Common myeloid progenitor, CD34-positive (primary cell): ENCODE measurements at regions of chr2 and their contacts with region 1.

Region 1: DNA sequence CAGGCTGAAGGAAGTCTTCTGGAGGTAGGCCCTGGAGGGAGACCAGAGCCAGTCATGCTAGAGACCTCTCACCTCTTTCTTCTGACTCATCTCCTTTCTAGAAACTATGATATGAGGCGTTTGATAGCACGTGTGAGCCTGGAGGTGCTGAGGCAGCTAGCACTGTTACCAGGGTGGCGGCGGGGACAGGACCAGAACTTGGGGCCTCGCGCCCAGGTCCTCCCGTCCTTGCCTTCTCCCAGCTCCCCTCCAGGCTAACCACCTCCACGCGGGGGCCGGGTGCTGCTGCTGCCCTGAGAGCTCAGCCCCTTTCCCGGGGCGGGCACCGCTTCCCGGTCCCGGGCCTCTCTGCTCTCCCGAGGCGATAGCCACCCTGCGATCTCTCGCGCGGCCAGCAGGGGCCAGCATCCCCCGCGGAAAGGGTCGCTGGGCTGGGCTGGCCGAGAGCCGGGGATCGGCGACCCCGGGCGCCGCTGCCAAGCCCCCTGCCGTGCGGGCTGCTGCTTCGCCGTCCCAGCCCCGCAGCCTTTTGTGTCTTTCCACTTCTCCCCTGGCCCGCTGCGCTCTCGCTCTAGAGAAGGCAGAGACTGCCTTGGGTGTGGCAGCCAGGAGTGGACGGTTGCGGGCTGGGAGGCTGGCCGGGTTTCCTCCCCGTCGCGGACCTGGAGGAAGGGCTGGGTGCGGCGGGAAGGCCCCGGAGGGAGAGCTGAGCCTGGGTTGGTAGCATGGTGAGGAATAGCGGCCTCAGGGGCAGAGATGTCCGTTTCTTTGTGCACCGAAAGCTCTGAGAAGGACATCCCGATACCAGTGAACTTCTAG is 49.1 kb downstream of the TMEM17 start:
- DNase-seq: peak; percentile 50 to 75 (median 72)
- H3K4me3 ChIP-seq: peak overlapping the region; percentile 32 to 88 (median 81)
- H3K27ac ChIP-seq: no peak overlapping the region
- H3K4me1 ChIP-seq: peaks cover 0 to 11% (median 8%) of the 10 kb centered on the region in 4 experiments
- H3K27me3 ChIP-seq: no peaks in the 10 kb centered on the region

Region 2: GRCh38 chr2:62443886-62444285 is 13.0 kb before region 1 on chr2:
- CTCF ChIA-PET with region 1: interaction called, 13 read pairs
- POLR2A ChIA-PET with region 1: interaction called, 3 read pairs
- DNase-seq: no peak
- H3K4me3 ChIP-seq: no peak overlapping the region
- H3K27ac ChIP-seq: no peak overlapping the region
- H3K4me1 ChIP-seq: no peaks in the 10 kb centered on the region
- H3K27me3 ChIP-seq: no peaks in the 10 kb centered on the region

Region 3: GRCh38 chr2:62475172-62476011 is 18.5 kb after region 1 on chr2:
- CTCF ChIA-PET with region 1: interaction called, 30 read pairs
- POLR2A ChIA-PET with region 1: no interaction called
- DNase-seq: peak; percentile 40 to 76 (median 67)
- H3K4me3 ChIP-seq: peak overlapping the region in 4 of 7 experiments; percentile 25 to 52 (median 46)
- H3K27ac ChIP-seq: peak overlapping the region; percentile 33 to 69
- H3K4me1 ChIP-seq: peaks cover 14 to 67% (median 50%) of the 10 kb centered on the region in 4 experiments
- H3K27me3 ChIP-seq: no peaks in the 10 kb centered on the region

Region 4: DNA sequence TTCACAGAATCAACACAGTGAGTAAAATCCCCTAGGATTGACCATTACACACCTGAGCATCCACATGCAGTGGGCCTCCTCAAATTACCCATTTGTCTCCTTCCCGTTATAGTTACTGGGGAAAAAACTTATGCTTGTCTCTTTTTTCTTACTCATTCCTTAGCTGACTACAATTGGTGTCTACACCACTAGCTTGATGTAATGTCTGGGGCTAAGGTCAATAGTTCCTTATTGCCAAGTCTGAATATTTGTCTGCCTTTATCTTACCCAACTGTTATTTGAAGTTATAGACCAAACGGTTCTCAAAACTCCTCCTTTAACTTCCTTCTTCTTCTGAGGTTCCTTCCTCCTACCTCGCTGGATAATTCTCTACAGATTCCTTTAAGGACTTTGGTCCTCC is 90.9 kb after region 1 on chr2:
- CTCF ChIA-PET with region 1: no interaction called
- POLR2A ChIA-PET with region 1: no interaction called
- DNase-seq: no peak
- H3K4me3 ChIP-seq: no peak overlapping the region
- H3K27ac ChIP-seq: no peak overlapping the region
- H3K4me1 ChIP-seq: no peaks in the 10 kb centered on the region
- H3K27me3 ChIP-seq: no peaks in the 10 kb centered on the region

Region 5: DNA sequence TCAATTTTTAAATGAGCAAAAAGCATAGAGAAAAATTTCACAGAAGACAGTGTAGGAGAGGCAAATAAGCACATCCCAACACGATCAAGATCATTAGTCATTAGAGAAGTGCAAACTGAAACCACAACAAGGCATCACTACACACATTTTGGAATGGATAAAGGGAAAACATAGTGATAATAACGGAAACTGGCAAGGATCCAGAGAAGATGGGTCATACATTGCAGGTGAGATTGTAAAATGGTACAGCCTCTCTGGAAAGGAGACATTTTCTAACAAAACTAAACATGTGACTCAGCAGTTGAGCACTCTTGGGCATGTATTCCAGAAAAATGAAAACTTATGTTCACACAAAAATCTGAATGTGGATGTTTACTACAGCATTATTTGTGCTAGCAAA is 147.4 kb after region 1 on chr2:
- CTCF ChIA-PET with region 1: no interaction called
- POLR2A ChIA-PET with region 1: no interaction called
- DNase-seq: no peak
- H3K4me3 ChIP-seq: no peak overlapping the region
- H3K27ac ChIP-seq: no peak overlapping the region
- H3K4me1 ChIP-seq: no peaks in the 10 kb centered on the region
- H3K27me3 ChIP-seq: no peaks in the 10 kb centered on the region

Region 6: DNA sequence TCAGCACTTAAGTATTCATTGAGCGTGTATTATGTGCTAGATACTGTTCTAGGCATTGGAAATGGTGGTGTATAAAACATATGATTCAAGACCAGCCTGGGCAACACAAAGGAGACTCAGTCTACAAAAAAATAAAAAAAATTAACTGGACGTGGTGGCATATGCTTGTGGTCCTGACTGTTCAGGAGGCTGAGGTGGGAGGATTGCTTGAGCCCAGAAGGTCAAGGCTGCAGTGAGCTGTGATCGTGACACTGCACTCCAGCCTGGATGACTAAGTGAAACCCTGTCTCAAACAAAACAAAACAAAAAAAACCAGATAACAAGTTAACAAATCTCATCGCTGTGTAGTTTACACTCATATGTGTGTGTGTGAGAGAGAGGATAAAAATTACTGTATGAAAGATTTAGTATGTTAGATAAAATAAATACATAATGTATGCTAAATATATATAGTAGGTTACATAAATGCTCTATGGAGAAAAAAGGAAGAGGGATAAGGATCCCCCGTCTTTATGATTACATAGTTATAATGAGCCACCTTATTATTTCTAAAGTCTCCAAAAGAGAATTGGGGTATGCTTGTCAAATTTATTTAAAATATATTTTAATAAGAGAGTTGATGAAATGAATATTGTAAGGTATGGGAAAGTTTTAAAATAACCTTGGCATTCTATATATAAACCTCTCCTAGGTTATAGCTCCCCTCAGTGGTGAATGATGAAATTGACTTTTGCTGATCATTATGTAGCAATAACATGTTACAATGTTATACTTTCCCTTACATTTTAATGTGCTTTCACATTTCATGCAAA is 317.8 kb after region 1 on chr2:
- CTCF ChIA-PET with region 1: interaction called, 126 read pairs
- POLR2A ChIA-PET with region 1: no interaction called
- DNase-seq: peak; percentile 49 to 75 (median 69)
- H3K4me3 ChIP-seq: no peak overlapping the region
- H3K27ac ChIP-seq: no peak overlapping the region
- H3K4me1 ChIP-seq: peaks cover 0 to 27% (median 10%) of the 10 kb centered on the region in 4 experiments
- H3K27me3 ChIP-seq: no peaks in the 10 kb centered on the region

Region 7: GRCh38 chr2:62787386-62787785 is 330.5 kb after region 1 on chr2:
- CTCF ChIA-PET with region 1: interaction called, 11 read pairs
- POLR2A ChIA-PET with region 1: no interaction called
- DNase-seq: peak; percentile 38 to 60 (median 58)
- H3K4me3 ChIP-seq: no peak overlapping the region
- H3K27ac ChIP-seq: no peak overlapping the region
- H3K4me1 ChIP-seq: no peaks in the 10 kb centered on the region
- H3K27me3 ChIP-seq: no peaks in the 10 kb centered on the region